CD8-positive, alpha-beta memory T cell (primary cell): ENCODE measurements at regions of chr12 and their contacts with region 1.

Region 1: GRCh38 chr12:121483949-121484348 is 84.0 kb downstream of the RNF34 start:
- DNase-seq: no peak
- H3K4me3 ChIP-seq: no peak overlapping the region
- H3K4me3 Mint-ChIP-seq: no peak overlapping the region
- H3K27ac ChIP-seq: no peak overlapping the region
- H3K27ac Mint-ChIP-seq: peak overlapping the region in 2 of 8 donors; percentile 19 to 87
- H3K4me1 ChIP-seq: no peaks in the 10 kb centered on the region
- H3K4me1 Mint-ChIP-seq: peaks cover 6 to 20% (median 6%) of the 10 kb centered on the region in 3 donors
- H3K27me3 ChIP-seq: no peaks in the 10 kb centered on the region
- H3K27me3 Mint-ChIP-seq: peaks cover 0 to 3% of the 10 kb centered on the region in 2 donors

Region 2: GRCh38 chr12:121376754-121377697 is 106.9 kb before region 1 on chr12:
- CTCF ChIA-PET with region 1: no interaction called
- POLR2A ChIA-PET with region 1: no interaction called
- DNase-seq: no peak
- H3K4me3 ChIP-seq: no peak overlapping the region
- H3K4me3 Mint-ChIP-seq: no peak overlapping the region
- H3K27ac ChIP-seq: no peak overlapping the region
- H3K27ac Mint-ChIP-seq: no peak overlapping the region
- H3K4me1 ChIP-seq: no peaks in the 10 kb centered on the region
- H3K4me1 Mint-ChIP-seq: no peaks in the 10 kb centered on the region
- H3K27me3 ChIP-seq: no peaks in the 10 kb centered on the region
- H3K27me3 Mint-ChIP-seq: peaks cover 0 to 17% of the 10 kb centered on the region in 2 donors

Region 3: DNA sequence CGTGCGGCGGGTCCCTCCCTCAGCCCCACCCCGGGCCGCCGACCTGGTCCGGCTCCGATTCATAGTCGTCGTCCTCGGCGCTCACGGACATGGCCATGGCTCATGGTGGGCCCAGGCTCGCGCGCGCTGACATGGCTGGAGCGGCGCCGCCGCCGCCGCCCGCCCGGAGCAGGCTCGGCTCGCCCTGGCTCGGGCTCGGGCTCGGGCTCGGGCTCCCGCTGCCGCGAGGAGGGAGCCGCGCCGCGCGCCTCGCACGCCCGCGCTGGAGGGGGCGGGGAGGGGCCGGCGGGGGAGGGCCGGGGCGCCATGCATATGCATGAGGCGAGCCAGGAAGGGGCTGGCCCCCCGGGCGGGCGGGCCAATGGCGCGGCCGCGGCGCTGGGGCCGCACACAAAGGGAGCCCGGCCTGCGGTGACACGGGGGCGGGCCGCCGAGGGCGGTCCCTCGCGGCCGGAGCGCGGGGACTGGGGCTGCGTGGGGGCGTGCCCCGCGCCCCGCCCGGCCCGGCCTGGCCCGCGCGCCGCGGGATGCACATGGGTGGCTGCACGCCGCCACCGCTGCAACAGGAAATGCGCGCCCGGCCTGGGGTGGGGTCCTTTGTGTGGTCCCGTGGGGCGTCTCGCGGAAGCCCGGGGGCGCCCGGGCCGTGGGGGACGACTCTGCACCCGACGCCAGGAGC is 16.7 kb before region 1 on chr12:
- CTCF ChIA-PET with region 1: interaction called, 17 read pairs
- POLR2A ChIA-PET with region 1: interaction called, 3 read pairs
- DNase-seq: peak; percentile 83 to 91 (median 87)
- H3K4me3 ChIP-seq: peak overlapping the region; percentile 50
- H3K4me3 Mint-ChIP-seq: peak overlapping the region in 4 of 7 donors; percentile 20 to 71 (median 54)
- H3K27ac ChIP-seq: peak overlapping the region; percentile 38
- H3K27ac Mint-ChIP-seq: peak overlapping the region in 2 of 8 donors; percentile 41 to 65
- H3K4me1 ChIP-seq: peaks cover 33% of the 10 kb centered on the region
- H3K4me1 Mint-ChIP-seq: peaks cover 18 to 44% (median 25%) of the 10 kb centered on the region in 3 donors
- H3K27me3 ChIP-seq: no peaks in the 10 kb centered on the region
- H3K27me3 Mint-ChIP-seq: no peaks in the 10 kb centered on the region

Region 4: DNA sequence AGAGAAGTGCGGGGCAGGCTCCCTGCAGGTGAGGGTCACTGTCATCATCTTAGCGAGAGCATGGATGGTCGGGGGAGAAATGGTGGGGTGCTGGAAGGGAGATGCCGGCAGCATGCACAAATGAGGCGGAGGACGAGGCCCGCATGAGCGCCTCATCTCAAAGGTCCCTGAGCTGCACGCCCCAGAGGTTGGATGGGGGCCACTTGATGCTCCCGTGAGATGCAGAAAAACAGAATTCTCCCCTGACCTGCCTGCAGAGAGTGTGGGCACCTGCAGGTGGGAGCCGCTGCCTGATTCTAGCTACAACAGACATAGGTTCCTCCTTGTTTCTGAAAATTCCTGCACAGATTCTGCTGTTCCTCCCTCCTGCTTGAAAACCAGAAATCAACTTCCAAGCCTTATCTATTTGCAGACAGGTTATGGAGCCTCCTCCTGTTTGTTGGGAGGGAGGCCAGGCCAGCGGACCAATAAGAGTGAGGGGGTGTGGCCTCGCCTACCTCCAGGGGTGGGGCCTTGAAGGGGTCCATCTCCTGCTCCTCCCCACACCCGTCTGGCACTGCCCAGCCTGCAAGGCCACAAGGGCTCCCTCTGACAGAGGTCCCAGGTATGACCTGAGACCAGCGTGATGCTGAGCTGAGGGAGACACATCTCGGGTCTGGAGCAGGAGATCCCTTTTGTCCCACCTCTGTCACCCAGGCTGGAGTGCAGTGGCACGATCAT is 29.7 kb after region 1 on chr12:
- CTCF ChIA-PET with region 1: no interaction called
- POLR2A ChIA-PET with region 1: no interaction called
- DNase-seq: no peak
- H3K4me3 ChIP-seq: no peak overlapping the region
- H3K4me3 Mint-ChIP-seq: no peak overlapping the region
- H3K27ac ChIP-seq: no peak overlapping the region
- H3K27ac Mint-ChIP-seq: peak overlapping the region in 7 of 8 donors; percentile 66 to 88 (median 74)
- H3K4me1 ChIP-seq: peaks cover 4% of the 10 kb centered on the region
- H3K4me1 Mint-ChIP-seq: peaks cover 6 to 15% (median 14%) of the 10 kb centered on the region in 3 donors
- H3K27me3 ChIP-seq: no peaks in the 10 kb centered on the region
- H3K27me3 Mint-ChIP-seq: no peaks in the 10 kb centered on the region